ENCODE measurements at regions of chr4 and their contacts with region 1.

Region 1: DNA sequence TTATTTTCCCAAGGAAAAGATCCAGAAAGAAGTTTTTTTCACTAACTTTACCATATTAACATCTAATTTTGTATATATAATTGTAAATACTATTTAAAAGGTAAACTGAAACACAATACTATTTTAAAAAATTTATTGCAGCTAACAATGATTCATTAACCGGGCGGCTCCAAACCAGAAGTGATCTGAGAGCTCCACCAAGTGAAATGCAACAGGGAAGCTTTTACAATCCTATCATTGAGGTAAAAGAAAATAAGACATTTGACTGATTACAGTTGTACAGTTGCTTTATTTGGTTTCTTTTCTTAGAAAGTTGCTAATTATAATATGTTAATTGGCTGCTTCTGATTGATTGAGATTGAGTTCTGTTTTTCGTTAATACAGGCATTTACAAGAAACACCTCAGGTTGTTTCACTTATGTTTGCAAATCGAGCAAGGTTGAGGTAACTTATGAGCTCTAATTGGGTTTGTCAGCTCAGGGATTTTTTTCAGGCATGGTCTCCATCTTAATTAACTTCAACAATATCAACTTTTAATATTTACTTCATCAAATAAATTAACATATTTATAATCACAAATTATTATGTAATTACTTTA is 220.2 kb upstream of the UGT8 start:
- DNase-seq: peak; percentile 78
- H3K4me3 ChIP-seq: no peak overlapping the region
- H3K27ac ChIP-seq: no peak overlapping the region
- H3K4me1 ChIP-seq: peaks cover 15% of the 10 kb centered on the region
- H3K27me3 ChIP-seq: no peaks in the 10 kb centered on the region

Region 2: GRCh38 chr4:113692809-113693411 is 685.5 kb before region 1 on chr4:
- in situ Hi-C with region 1: no loop called
- DNase-seq: no peak
- H3K4me3 ChIP-seq: no peak overlapping the region
- H3K27ac ChIP-seq: no peak overlapping the region
- H3K4me1 ChIP-seq: 0 out of 2 replicates have a peak, but pooled peaks cover 4% of the 10 kb centered on the region
- H3K27me3 ChIP-seq: no peaks in the 10 kb centered on the region

Region 3: DNA sequence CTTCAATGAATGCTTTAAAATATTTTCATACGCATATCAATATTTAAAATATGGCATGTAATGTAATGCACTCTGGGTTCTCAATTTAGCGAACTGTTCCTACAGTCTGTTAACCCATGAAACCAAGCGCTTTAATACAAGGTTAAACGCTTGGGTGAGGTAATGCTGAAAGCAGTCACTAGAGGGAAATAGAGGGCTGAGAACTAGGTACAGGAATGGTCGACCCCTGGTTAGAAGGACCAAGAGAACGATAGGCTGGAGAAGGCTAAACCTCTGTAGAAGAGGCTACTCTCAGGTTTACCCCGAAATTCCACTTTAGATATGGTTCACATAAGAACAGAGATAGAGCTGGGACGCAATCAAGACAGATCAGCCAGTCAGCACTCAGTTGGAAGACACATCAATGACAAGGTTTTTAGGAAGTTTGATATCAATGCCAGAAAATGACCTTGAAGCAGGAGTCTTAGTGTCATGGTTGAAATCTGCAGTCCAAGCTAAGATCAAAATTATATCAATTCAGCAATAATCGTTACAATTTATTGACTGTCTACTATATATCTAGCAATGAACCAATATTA is 425.9 kb before region 1 on chr4:
- in situ Hi-C with region 1: loop called (anchors 10 kb)
- DNase-seq: peak; percentile 63
- H3K4me3 ChIP-seq: no peak overlapping the region
- H3K27ac ChIP-seq: no peak overlapping the region
- H3K4me1 ChIP-seq: peaks cover 24% of the 10 kb centered on the region
- H3K27me3 ChIP-seq: no peaks in the 10 kb centered on the region